ENCODE measurements at regions of chr9 and their contacts with region 1.

Region 1: GRCh38 chr9:132877824-132878694 is at the start of gene AK8:
- DNase-seq: no peak
- H3K4me3 ChIP-seq: peak within 1 kb of the TSS; percentile 80 to 98
- H3K27ac ChIP-seq: peak within 1 kb of the TSS; percentile 91
- H3K4me1 ChIP-seq: peaks cover 14% of the 10 kb centered on the region
- H3K27me3 ChIP-seq: no peaks in the 10 kb centered on the region
- CTCF ChIP-seq: no peak
- POLR2A ChIP-seq: peak in 1 of 2 donors; percentile 10
- total RNA-seq, gene AK8: 0.25 TPM

Region 2: DNA sequence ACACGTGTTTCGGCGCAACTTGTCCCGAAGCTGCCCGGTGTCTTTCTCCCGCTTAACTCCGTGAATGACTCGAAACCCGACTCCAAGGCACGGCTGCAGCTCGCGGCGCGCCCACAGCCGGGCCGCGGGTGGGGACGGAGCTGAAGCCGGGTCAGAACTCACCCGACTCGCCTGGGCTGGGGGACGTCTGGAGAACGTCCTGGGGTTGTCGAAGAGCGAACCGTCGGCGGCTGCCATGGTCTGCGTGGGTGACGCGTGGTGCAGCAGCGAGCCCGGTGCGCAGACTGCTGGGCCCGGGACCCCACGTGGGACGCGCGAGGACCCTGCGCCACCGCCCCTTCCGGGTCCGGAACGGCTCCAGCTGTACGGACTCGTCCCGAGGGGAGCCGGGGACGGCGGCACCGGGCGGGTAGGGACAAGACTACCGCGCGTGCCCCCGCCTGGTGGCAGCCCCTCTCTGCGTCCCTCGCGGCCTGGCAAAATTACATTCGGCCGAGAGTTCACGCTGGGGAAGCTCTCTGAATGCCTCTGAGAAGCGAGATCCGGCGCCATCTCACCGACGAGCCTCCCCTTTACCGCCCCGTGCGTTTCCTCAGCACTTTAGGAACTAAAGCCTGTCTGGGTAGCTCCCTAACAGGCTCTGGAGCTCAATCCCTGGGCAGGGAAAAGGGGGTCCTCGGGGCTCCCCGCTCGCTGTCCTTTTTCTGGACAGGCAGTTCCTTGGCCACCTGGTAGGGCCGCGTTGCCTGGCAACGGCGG is 208.2 kb before region 1 on chr9 and contains the start of gene DDX31:
- intact Hi-C with region 1: loop called (anchors 10 kb)
- DNase-seq: no peak
- H3K4me3 ChIP-seq: peak within 1 kb of the TSS; percentile 89 to 98
- H3K27ac ChIP-seq: peak within 1 kb of the TSS; percentile 96
- H3K4me1 ChIP-seq: peaks cover 52% of the 10 kb centered on the region
- H3K27me3 ChIP-seq: no peaks in the 10 kb centered on the region
- CTCF ChIP-seq: no peak
- POLR2A ChIP-seq: no peak
- total RNA-seq, gene DDX31: 17.9 TPM

Region 3: DNA sequence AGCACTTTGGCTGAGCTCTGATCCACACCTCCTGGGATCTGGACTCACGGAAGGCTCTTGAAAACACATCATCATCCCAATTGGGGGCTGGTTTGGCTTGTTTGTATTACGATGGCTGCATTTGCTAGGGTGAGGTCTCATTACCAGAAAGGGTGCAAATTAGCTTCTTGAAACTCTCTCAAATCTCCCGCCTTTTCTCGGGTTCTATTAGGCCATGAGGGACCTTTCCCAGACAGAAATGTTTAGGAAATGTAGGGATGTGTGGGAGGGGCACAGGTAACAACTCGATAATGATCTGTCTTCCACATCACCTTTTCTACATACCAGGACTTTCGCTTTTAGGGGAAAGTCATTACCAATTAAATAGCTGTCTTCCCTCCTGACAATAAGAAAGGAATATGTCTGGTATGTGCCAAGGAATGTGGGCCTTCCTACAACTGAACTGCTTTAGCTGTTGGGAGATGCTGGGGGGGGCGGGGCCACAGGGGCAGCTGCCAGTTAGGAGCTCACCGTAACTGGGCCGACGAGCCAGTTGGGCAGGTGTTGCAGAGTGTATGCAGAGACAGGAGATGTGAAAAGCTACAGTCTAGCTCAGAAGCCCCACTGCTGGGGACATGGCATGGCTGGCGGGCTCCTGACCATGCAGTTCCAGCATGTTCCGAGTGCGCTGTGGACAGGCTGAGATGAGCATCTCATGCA is 71.2 kb before region 1 on chr9:
- intact Hi-C with region 1: no loop called
- DNase-seq: peak; percentile 28 to 60
- H3K4me3 ChIP-seq: no peak overlapping the region
- H3K27ac ChIP-seq: no peak overlapping the region
- H3K4me1 ChIP-seq: no peaks in the 10 kb centered on the region
- H3K27me3 ChIP-seq: no peaks in the 10 kb centered on the region
- CTCF ChIP-seq: no peak
- POLR2A ChIP-seq: no peak